Caco-2 (cell line): ENCODE measurements at regions of chr4 and their contacts with region 1.

Region 1: GRCh38 chr4:128653517-128654444 is 155.7 kb upstream of the JADE1 start:
- DNase-seq: peak; percentile 79 to 93
- H3K4me3 ChIP-seq: no peak overlapping the region
- H3K4me3 Mint-ChIP-seq: peak overlapping the region; percentile 54
- H3K27ac Mint-ChIP-seq: peak overlapping the region; percentile 73
- H3K4me1 ChIP-seq: peaks cover 54% of the 10 kb centered on the region
- H3K4me1 Mint-ChIP-seq: peaks cover 26% of the 10 kb centered on the region
- H3K27me3 ChIP-seq: no peaks in the 10 kb centered on the region
- H3K27me3 Mint-ChIP-seq: no peaks in the 10 kb centered on the region
- CTCF ChIP-seq: no peak

Region 2: DNA sequence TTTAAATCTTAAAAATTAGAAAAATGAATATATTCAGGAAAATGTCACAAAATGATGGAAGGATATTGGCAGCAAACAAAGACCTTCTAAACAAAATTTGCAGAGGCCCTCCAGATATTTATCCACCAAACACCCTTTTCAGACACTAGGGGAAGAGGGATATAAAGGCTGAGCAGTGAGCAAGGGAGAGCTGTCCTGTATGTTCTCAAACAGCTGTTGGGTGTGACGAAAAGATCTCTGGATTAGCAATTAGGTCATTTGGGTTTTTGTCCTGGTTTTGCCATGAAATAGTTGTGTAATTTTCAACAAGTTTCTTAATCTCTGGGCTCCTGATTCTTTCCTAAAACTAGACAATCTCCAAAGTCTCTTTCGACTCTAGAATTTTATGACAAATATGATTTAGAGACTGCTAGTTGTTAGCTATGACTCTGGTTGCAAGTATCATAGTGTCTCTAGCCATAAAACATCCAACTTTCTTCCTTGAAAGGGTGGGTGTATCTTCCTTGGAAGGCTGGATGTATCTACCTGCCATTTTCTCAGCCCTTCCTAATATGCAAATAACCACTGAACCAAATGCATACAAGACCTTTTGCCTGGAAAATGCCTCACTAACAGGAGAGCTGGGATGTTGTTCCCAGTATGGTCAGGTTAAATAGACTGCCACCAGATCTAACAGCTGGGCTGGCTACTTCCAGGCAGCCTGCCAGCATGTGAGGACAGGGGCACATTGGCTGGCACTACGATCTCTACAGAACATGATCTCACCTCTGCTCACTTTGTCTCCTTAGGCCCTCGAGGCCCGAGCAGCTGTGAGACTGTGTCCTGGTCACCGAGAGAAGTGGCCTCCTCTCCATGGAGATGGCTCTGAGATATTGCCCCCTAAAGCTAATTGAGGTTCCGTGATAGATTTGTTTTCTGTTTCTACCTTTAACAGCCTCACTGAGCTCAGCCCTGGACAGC is 69.7 kb before region 1 on chr4:
- CTCF ChIA-PET with region 1: no interaction called
- POLR2A ChIA-PET with region 1: no interaction called
- intact Hi-C with region 1: no loop called
- DNase-seq: no peak
- H3K4me3 ChIP-seq: no peak overlapping the region
- H3K4me3 Mint-ChIP-seq: no peak overlapping the region
- H3K27ac Mint-ChIP-seq: no peak overlapping the region
- H3K4me1 ChIP-seq: no peaks in the 10 kb centered on the region
- H3K4me1 Mint-ChIP-seq: no peaks in the 10 kb centered on the region
- H3K27me3 ChIP-seq: no peaks in the 10 kb centered on the region
- H3K27me3 Mint-ChIP-seq: no peaks in the 10 kb centered on the region
- CTCF ChIP-seq: no peak

Region 3: DNA sequence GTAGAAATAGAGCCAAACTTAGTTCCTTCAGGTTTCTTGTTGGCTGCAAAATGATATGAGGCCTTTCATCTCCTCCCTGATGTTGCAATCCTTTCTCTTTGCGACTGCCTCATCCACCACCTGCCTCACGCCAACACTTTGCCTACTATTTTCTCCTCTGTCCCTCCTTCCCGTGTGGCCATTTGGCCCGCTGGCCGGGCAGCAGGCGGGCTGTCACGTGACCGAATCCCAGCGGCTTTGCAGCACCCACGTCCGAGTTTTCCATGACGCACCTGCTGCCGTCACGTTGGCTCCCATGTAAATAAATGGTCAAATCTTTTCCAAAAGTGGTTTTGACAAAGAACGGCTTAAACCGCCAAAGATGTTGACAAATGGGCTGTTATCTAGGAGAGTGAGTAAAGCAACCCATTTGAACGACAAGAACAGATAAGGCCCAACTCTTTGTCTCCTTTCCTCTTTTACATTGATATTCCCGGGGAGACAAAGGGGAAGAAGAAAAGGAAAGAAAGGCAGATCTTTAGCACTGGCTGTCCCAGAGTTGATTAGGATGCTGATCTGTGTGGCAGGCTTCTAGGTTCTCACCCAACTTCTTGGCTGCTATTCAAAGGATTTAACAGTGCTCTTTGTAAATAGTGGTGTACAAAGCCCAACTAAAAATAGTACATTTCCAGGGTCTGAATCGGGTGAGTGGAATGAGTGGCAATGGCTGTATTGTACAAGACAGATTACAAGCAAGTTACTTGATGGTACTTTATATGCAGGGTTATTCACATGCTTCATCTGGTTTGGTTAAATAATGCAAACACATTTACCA is 18.4 kb before region 1 on chr4:
- CTCF ChIA-PET with region 1: no interaction called
- POLR2A ChIA-PET with region 1: no interaction called
- intact Hi-C with region 1: loop called (anchors 1 kb)
- DNase-seq: peak; percentile 89 to 90
- H3K4me3 ChIP-seq: 0 out of 2 replicates have a peak overlapping the region, but pooled peaks have one; percentile 11
- H3K4me3 Mint-ChIP-seq: peak overlapping the region; percentile 76
- H3K27ac Mint-ChIP-seq: peak overlapping the region; percentile 98
- H3K4me1 ChIP-seq: peaks cover 14% of the 10 kb centered on the region
- H3K4me1 Mint-ChIP-seq: peaks cover 25% of the 10 kb centered on the region
- H3K27me3 ChIP-seq: no peaks in the 10 kb centered on the region
- H3K27me3 Mint-ChIP-seq: no peaks in the 10 kb centered on the region
- CTCF ChIP-seq: no peak

Region 4: GRCh38 chr4:128715616-128716015 is 61.8 kb after region 1 on chr4:
- CTCF ChIA-PET with region 1: no interaction called
- POLR2A ChIA-PET with region 1: no interaction called
- intact Hi-C with region 1: loop called (anchors 2 kb)
- DNase-seq: no peak
- H3K4me3 ChIP-seq: no peak overlapping the region
- H3K4me3 Mint-ChIP-seq: no peak overlapping the region
- H3K27ac Mint-ChIP-seq: no peak overlapping the region
- H3K4me1 ChIP-seq: peaks cover 19% of the 10 kb centered on the region
- H3K4me1 Mint-ChIP-seq: peaks cover 12% of the 10 kb centered on the region
- H3K27me3 ChIP-seq: no peaks in the 10 kb centered on the region
- H3K27me3 Mint-ChIP-seq: no peaks in the 10 kb centered on the region
- CTCF ChIP-seq: no peak